Endothelial cell of umbilical vein (primary cell): ENCODE measurements at regions of chr2 and their contacts with region 1.

Region 1: GRCh38 chr2:159497256-159497655 is 119.1 kb downstream of the BAZ2B start:
- DNase-seq: peak; percentile 93
- H3K4me3 ChIP-seq: peak overlapping the region in 1 of 3 experiments; percentile 2
- H3K27ac ChIP-seq: peak overlapping the region; percentile 83
- H3K4me1 ChIP-seq: peaks cover 21% of the 10 kb centered on the region
- H3K27me3 ChIP-seq: no peaks in the 10 kb centered on the region
- CTCF ChIP-seq: no peak
- POLR2A ChIP-seq: no peak

Region 2: DNA sequence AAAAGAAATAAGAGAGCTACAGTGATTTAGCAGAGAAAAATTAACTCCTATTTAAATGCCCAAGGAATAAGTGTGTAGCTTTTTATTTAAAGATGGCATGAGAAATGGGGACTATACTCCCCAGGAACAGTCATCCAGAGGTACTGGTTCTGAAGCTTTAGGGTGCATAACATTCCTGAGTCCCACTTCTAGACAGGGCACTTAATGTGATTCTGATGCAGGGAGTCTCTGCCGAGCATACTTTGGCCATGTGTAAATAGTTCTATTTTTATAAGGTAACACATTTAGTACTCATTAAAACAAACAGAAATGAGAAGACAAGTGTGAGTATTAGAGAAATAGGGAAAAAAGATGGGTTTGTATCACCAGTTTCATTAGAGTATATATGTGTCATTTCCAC is 56.1 kb before region 1 on chr2:
- CTCF ChIA-PET with region 1: no interaction called
- POLR2A ChIA-PET with region 1: no interaction called
- dilution Hi-C with region 1: no loop called
- intact Hi-C with region 1: no loop called
- DNase-seq: no peak
- H3K4me3 ChIP-seq: no peak overlapping the region
- H3K27ac ChIP-seq: no peak overlapping the region
- H3K4me1 ChIP-seq: no peaks in the 10 kb centered on the region
- H3K27me3 ChIP-seq: no peaks in the 10 kb centered on the region
- CTCF ChIP-seq: no peak
- POLR2A ChIP-seq: no peak

Region 3: DNA sequence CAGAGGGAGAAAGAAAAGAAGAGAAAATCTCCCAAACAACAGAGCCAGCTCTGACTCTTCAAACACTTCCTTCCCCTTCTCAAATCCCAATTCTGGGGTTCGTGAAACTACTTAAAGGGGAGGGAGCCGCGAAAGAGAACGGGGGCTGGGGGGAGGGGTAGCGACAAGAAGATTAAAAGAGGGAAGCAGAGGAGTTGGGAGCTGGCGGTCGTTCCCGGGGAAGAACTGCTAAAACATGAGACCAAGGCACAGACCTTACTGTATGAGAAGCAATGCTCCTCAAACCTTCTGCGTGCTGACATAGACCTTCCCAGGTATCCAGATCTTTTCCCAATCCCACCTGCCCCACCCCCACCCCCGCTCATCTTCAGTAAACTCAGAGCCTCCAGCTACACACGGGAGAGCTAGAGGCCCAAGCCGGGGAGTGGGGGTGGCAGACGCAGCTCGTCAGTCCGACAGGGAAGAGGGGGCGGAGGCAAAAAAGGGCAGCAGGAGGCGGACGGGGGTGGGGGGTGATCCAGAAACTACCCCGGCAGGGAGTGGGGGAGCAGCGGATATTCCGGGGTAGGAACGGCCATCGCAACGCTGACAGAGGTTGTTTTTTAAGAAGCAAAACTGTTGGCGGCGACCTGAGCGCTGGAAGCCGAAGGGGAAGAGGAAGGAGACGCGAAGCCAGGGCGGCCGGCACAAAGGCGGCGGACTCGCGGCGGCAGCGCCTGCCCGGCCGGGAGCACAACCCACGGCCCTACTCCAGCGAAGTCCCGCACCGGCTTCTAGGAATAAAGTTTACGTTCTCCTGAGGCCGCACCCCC is 118.1 kb after region 1 on chr2:
- CTCF ChIA-PET with region 1: no interaction called
- POLR2A ChIA-PET with region 1: no interaction called
- dilution Hi-C with region 1: no loop called
- intact Hi-C with region 1: loop called (anchors 1 kb)
- DNase-seq: peak; percentile 96
- H3K4me3 ChIP-seq: peak overlapping the region; percentile 49 to 100 (median 100)
- H3K27ac ChIP-seq: peak overlapping the region; percentile 100
- H3K4me1 ChIP-seq: peaks cover 30% of the 10 kb centered on the region
- H3K27me3 ChIP-seq: no peaks in the 10 kb centered on the region
- CTCF ChIP-seq: no peak
- POLR2A ChIP-seq: peak; percentile 82